Activated CD4-positive, alpha-beta memory T cell treated with anti-CD3 and anti-CD28 coated beads, Interleukin-2, amount 10 ng/mL, durations not matched to agents 7 days and 5 days (primary cell): ENCODE measurements at regions of chr13 and their contacts with region 1.

Region 1: DNA sequence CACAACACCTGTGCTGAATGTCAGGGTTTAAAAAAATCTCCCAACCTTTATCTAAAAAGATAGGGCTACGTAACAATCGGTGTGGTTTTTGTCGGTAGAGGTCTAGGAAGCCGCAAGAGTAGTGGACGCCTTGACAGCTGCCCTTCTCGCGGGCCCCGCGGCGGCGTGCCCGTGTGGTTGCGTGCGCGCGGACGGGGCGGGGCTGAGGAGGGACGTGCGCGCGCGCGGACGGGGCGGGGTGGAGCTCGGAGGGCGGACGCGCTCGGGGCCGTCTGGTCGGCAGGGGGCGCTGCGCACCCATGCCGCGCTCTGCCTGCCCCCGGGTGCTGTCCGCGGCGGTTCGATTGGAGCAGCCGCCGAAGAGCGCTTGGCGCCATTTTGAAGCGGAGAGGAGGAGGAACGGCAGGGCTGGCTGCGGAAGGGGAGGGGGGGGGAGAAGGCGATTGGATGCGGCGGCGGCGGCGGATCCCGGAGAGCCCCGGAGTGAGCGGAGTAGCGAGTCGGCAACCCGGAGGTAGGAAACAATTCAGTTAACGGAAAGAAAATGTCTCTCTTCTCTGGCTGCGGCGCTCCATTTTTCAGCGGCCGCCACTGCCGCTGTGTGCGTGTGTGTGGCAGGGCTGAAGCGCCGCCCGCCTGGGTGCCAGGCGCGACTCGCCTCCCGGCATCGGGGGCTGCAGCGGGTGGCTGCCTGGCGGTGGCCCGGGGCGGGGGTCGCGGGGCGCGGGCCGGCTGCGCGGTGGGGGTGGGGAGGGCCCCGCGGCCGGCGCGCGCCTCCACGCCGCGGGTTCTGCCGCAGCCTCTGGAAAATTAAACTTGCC is at the start of gene PDS5B:
- DNase-seq: peak; percentile 95
- H3K4me3 Mint-ChIP-seq: peak within 1 kb of the TSS; percentile 93
- H3K27ac Mint-ChIP-seq: peak within 1 kb of the TSS; percentile 92
- H3K4me1 Mint-ChIP-seq: peaks cover 40% of the 10 kb centered on the region
- H3K27me3 Mint-ChIP-seq: peaks cover 3% of the 10 kb centered on the region
- total RNA-seq, gene PDS5B: 59.5 to 60.6 TPM

Region 2: GRCh38 chr13:32370805-32371204 is 215.5 kb before region 1 on chr13:
- CTCF ChIA-PET with region 1: no interaction called
- POLR2A ChIA-PET with region 1: no interaction called
- DNase-seq: no peak
- H3K4me3 Mint-ChIP-seq: no peak overlapping the region
- H3K27ac Mint-ChIP-seq: no peak overlapping the region
- H3K4me1 Mint-ChIP-seq: no peaks in the 10 kb centered on the region
- H3K27me3 Mint-ChIP-seq: no peaks in the 10 kb centered on the region

Region 3: DNA sequence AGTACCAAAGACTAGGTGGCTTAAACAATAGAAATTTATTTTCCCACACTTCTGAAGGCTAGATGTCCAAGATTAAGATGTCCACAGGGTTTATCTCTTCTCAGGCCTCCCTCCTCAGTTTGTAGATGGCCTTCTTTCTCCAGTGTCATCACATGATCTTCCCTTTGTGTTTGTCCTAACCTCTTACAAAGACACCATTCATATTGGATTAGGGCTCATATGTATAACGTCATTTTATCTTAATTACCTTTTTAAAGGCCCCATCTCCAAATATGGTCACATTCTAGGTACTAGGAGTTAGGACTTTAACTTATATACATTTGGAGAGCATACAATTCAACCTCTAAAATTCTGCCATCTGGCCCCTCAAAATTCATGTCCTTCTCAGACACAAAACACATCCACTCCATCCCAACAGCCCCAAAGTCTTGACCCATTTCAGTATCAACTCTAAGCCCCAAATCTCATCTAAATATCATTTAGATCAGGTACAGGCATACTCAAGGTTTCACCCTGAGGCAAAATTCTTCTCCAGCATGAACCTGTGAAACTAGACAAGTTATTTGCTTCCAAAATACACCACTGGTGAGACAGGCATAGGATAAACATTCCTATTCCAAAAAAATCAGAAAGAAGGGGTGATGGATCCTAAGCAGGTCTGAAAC is 81.9 kb before region 1 on chr13:
- CTCF ChIA-PET with region 1: no interaction called
- POLR2A ChIA-PET with region 1: no interaction called
- DNase-seq: no peak
- H3K4me3 Mint-ChIP-seq: no peak overlapping the region
- H3K27ac Mint-ChIP-seq: no peak overlapping the region
- H3K4me1 Mint-ChIP-seq: no peaks in the 10 kb centered on the region
- H3K27me3 Mint-ChIP-seq: no peaks in the 10 kb centered on the region

Region 4: GRCh38 chr13:32538621-32539246 is 47.6 kb before region 1 on chr13 and contains the start of gene N4BP2L2:
- CTCF ChIA-PET with region 1: interaction called, 10 read pairs
- POLR2A ChIA-PET with region 1: interaction called, 13 read pairs
- DNase-seq: peak; percentile 93
- H3K4me3 Mint-ChIP-seq: peak within 1 kb of the TSS; percentile 95
- H3K27ac Mint-ChIP-seq: peak within 1 kb of the TSS; percentile 98
- H3K4me1 Mint-ChIP-seq: peaks cover 42% of the 10 kb centered on the region
- H3K27me3 Mint-ChIP-seq: peaks cover 2% of the 10 kb centered on the region
- total RNA-seq, gene N4BP2L2: 119 to 126 TPM

Region 5: DNA sequence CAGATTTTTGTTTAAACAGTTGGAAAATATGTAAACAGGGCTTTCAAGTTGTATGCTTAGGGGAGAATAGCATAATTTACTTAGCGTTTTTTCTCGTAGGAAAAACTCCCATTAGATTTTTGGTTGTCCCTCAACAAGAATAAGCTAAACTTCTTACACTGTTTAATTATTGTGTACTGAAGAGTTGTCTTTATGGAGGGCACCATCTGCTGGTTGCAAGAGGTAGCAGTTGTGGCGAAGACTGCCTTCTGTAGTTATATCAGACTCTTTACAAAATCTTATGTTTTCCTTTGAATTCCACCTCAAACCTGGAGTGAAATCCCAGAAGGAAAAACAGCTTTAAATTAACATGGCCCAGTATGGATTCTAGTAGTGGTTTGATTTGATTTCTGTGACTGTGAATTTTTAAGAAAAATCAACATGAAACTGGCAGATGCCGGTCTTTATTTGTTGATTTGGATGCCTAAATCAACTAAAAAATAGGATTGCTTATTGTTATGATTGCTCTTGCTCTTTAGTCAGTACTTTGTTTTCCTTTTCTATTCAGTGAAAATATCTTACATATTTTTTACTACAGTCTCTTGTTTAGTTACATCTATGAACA is 53.3 kb after region 1 on chr13:
- CTCF ChIA-PET with region 1: interaction called, 52 read pairs
- POLR2A ChIA-PET with region 1: interaction called, 7 read pairs
- DNase-seq: peak; percentile 56
- H3K4me3 Mint-ChIP-seq: no peak overlapping the region
- H3K27ac Mint-ChIP-seq: no peak overlapping the region
- H3K4me1 Mint-ChIP-seq: peaks cover 37% of the 10 kb centered on the region
- H3K27me3 Mint-ChIP-seq: no peaks in the 10 kb centered on the region

Region 6: DNA sequence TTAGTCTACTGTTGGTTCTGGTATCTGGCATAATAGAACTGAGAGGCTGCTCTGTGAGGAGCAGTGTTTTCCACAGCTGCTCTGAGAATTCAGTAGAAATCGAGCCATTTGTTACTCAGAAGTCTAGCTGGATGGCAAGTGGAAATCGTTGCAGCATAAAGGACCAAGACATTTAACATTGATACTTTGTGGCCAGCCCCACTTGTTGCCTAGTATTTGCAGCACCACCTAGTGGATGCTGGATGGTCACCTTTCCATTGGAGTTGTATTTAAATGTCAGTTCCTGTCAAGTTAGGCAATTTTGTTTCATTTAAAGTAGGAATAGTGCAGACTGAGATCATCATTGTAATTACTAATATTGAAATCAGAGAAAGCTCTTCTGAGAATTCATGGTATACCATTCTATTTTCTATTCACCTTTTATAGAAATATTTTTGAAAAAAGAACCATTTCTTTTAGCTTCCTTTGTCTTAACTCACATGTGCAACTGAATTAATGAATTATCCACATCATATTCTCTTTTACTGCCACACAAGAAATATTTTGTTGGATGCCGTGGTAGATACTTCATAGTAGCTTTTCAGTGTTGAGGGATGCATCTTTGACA is 64.5 kb after region 1 on chr13:
- CTCF ChIA-PET with region 1: interaction called, 46 read pairs
- POLR2A ChIA-PET with region 1: interaction called, 8 read pairs
- DNase-seq: peak; percentile 64
- H3K4me3 Mint-ChIP-seq: no peak overlapping the region
- H3K27ac Mint-ChIP-seq: no peak overlapping the region
- H3K4me1 Mint-ChIP-seq: peaks cover 30% of the 10 kb centered on the region
- H3K27me3 Mint-ChIP-seq: no peaks in the 10 kb centered on the region

Region 7: DNA sequence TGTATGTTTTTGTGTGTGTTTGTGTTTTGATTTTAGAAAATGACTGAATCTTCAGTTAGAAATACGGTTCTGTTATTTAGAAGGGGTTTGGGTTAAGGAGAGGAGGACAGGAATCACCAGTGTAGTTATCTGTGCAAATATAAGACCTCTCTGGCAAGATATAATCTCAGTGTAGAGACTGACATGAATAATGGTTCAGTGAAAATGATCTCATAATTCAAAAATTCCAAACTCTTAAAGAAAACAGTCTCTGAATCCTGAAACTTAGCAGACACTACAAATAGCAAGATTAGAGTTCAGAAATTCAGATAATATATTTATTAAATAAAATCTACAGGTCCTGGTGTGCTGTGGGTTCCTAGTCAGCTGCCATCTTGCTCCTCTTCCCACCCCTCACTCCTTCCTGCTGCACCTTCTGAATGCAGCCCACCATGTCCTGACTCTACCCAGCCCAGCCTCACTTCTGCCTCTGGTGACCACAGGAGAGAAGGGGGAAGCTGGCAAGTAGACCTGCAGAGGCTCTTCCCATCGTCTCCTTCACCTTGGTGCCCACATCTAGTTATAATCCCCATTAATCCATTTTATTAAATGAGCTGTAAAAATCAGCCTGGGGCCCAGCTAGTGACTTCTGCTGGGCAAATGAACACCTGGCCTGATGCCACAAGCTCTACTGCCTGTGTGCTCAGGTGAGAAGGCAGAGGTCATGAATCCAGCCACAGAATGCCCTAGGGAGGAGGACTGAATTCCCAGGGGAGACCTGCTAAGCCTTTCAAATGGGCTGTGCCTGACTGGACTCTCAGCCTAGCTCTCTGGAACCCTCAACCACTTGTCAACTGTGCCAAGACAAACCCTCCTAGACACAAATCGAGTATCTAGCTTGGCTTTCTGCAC is 73.7 kb after region 1 on chr13:
- CTCF ChIA-PET with region 1: interaction called, 11 read pairs
- POLR2A ChIA-PET with region 1: no interaction called
- DNase-seq: no peak
- H3K4me3 Mint-ChIP-seq: no peak overlapping the region
- H3K27ac Mint-ChIP-seq: no peak overlapping the region
- H3K4me1 Mint-ChIP-seq: peaks cover 7% of the 10 kb centered on the region
- H3K27me3 Mint-ChIP-seq: no peaks in the 10 kb centered on the region

Region 8: DNA sequence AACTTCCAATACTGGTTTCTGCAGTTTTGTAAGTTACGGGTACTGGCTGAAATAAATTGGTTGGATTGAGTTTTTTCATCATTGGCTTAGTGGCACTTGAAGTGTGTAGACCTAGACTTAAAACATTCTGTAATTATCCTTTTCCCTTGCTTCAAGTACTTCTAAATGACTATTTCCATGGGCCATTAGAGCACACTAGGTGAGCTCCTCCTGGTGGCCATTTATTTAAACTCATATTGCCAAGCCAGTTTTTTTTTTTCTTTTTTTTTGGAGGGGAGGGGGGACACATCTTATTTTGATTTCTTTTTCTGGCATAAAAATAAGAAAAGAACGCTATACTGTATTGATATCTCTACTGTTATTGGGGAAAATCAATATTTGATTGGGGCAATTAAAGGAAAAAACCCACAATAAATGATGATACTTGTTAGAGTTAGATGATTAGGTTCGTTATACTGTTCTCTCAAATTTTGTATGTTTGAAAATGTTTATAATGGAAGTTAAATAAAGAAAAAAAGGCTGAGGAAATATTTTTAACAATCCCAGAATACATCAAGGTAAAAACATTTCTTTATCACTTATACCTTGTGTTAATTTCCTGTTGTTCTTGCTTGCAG is 82.8 kb after region 1 on chr13:
- CTCF ChIA-PET with region 1: interaction called, 21 read pairs
- POLR2A ChIA-PET with region 1: interaction called, 5 read pairs
- DNase-seq: no peak
- H3K4me3 Mint-ChIP-seq: no peak overlapping the region
- H3K27ac Mint-ChIP-seq: no peak overlapping the region
- H3K4me1 Mint-ChIP-seq: peaks cover 2% of the 10 kb centered on the region
- H3K27me3 Mint-ChIP-seq: no peaks in the 10 kb centered on the region

Region 9: GRCh38 chr13:32737111-32737571 is 150.9 kb after region 1 on chr13:
- CTCF ChIA-PET with region 1: interaction called, 10 read pairs
- POLR2A ChIA-PET with region 1: interaction called, 4 read pairs
- DNase-seq: no peak
- H3K4me3 Mint-ChIP-seq: peak overlapping the region; percentile 73
- H3K27ac Mint-ChIP-seq: peak overlapping the region; percentile 82
- H3K4me1 Mint-ChIP-seq: peaks cover 26% of the 10 kb centered on the region
- H3K27me3 Mint-ChIP-seq: no peaks in the 10 kb centered on the region